A549 (cell line): ENCODE measurements at regions of chr14 and their contacts with region 1.

Region 1: DNA sequence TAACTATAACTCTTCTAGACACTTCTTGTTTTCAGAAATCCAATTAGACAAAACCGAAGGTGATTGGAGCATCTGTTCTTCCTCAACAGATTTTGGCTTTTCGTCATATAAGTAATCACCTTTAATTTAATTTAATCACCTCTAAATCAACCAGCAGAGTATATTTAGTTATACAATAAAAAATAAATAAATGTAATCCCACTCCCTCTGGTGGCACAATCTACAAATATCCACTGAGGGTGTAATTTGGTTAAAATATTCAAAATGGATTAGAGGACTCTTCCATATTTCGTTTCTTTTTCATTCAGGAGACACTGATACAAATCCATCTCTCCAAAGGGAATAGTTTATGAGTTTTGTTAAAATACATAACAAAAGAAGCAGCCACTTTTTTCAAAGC is 18.3 kb upstream of the SLC35F4 start:
- DNase-seq: no peak
- ATAC-seq: no peak
- H3K4me3 ChIP-seq: no peak overlapping the region
- H3K27ac ChIP-seq: no peak overlapping the region
- H3K4me1 ChIP-seq: no peaks in the 10 kb centered on the region
- CTCF ChIP-seq: 0 out of 3 replicates have a peak, but pooled peaks have one; percentile 9
- EP300 ChIP-seq: no peak
- POLR2A ChIP-seq: no peak
- RAD21 ChIP-seq: peak; percentile 11 to 30; a peak in 1 of 5 replicates

Region 2: GRCh38 chr14:57871459-57872080 is 12.6 kb before region 1 on chr14:
- CTCF ChIA-PET with region 1: interaction called, 29 read pairs
- POLR2A ChIA-PET with region 1: no interaction called
- DNase-seq: peak; percentile 21 to 43
- ATAC-seq: peak; percentile 75 to 89
- H3K4me3 ChIP-seq: no peak overlapping the region
- H3K27ac ChIP-seq: no peak overlapping the region
- H3K4me1 ChIP-seq: no peaks in the 10 kb centered on the region
- CTCF ChIP-seq: peak; percentile 67
- EP300 ChIP-seq: no peak
- POLR2A ChIP-seq: no peak
- RAD21 ChIP-seq: peak; percentile 65 to 68

Region 3: DNA sequence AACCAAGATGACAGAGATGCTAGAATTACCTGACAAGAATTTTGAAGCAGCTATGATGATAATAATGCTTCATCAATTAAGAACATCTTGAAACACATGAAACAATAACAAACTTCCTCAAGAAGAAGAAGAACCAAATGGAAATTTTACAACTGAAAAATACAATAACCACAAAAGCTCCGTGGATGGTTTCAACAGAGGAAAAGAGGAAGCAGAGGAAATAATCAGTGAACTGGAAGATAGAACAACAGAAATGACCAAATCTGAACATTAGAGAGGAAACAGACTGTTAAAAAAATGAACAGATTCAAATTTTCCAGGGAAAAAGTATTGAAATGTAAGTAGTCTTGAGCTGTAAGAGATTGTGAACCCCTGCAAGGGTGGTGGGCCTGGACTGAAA is 44.6 kb after region 1 on chr14:
- CTCF ChIA-PET with region 1: no interaction called
- POLR2A ChIA-PET with region 1: no interaction called
- DNase-seq: no peak
- ATAC-seq: no peak
- H3K4me3 ChIP-seq: no peak overlapping the region
- H3K27ac ChIP-seq: no peak overlapping the region
- H3K4me1 ChIP-seq: no peaks in the 10 kb centered on the region
- CTCF ChIP-seq: no peak
- EP300 ChIP-seq: no peak
- POLR2A ChIP-seq: no peak
- RAD21 ChIP-seq: no peak